Activated B cell treated with CpG ODN at 0.5 μM for 24 hours (primary cell): ENCODE measurements at regions of chr1 and their contacts with region 1.

Region 1: GRCh38 chr1:247373721-247374141 is 42.1 kb upstream of the ZNF496 start:
- DNase-seq: peak; percentile 52
- ATAC-seq: peak; percentile 87
- H3K4me3 Mint-ChIP-seq: peak overlapping the region; percentile 32
- H3K27ac Mint-ChIP-seq: no peak overlapping the region
- H3K4me1 Mint-ChIP-seq: peaks cover 7% of the 10 kb centered on the region
- H3K27me3 Mint-ChIP-seq: peaks cover 11% of the 10 kb centered on the region
- CTCF ChIP-seq: no peak

Region 2: GRCh38 chr1:246907472-246907871 is 466.3 kb before region 1 on chr1:
- CTCF ChIA-PET with region 1: interaction called, 11 read pairs
- POLR2A ChIA-PET with region 1: no interaction called
- intact Hi-C with region 1: loop called (anchors 1 kb)
- DNase-seq: no peak
- ATAC-seq: no peak
- H3K4me3 Mint-ChIP-seq: no peak overlapping the region
- H3K27ac Mint-ChIP-seq: no peak overlapping the region
- H3K4me1 Mint-ChIP-seq: no peaks in the 10 kb centered on the region
- H3K27me3 Mint-ChIP-seq: no peaks in the 10 kb centered on the region
- CTCF ChIP-seq: no peak

Region 3: DNA sequence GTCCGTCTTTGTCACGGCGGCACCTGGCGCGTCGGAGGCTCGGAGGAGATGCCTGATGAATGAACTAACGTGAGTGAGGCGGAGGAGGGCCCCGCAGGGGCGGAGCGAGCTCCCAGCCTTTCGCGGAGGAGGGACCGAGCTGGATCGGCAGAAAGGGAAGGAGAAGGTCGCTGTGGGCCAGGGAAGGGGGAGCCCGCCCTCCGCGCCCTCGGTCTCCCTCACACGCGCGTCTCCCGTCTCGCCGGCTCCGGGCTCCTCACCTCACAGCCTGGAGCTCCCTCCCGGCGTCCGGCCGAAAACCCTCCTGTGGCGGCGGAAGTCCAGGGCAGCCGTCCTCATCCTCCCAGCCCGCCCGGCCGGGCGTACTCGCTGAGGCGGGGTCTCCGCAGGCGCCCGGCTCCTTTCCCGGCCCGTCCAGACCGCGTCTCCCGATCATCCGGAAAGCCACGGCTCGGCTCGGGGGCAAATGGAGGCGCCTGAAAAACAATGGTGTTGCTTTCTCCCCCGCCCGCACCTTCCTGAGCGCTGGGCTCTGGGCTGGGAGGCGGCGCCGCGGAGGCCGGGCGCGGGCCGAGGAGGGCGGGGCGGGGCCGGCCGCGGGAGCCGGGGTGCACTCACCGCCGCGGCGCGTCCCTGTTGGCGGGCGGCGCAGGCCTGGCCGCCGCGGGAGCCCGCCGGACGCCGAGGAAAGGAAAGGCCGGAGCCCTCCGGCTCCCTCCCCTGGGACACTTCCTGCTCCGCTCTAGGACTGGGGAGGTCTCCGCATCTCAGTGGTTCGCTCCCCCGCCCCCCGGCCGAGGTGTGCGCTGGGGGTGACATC is 42.3 kb before region 1 on chr1 and contains the start of gene ZNF496:
- CTCF ChIA-PET with region 1: interaction called, 6 read pairs
- POLR2A ChIA-PET with region 1: no interaction called
- intact Hi-C with region 1: loop called (anchors 5 kb)
- DNase-seq: peak; percentile 59
- ATAC-seq: peak; percentile 73
- H3K4me3 Mint-ChIP-seq: peak within 1 kb of the TSS; percentile 89
- H3K27ac Mint-ChIP-seq: peak within 1 kb of the TSS; percentile 59
- H3K4me1 Mint-ChIP-seq: peaks cover 23% of the 10 kb centered on the region
- H3K27me3 Mint-ChIP-seq: no peaks in the 10 kb centered on the region
- CTCF ChIP-seq: no peak
- total RNA-seq, gene ZNF496: 15.0 and 21.2 TPM in 2 replicates

Region 4: DNA sequence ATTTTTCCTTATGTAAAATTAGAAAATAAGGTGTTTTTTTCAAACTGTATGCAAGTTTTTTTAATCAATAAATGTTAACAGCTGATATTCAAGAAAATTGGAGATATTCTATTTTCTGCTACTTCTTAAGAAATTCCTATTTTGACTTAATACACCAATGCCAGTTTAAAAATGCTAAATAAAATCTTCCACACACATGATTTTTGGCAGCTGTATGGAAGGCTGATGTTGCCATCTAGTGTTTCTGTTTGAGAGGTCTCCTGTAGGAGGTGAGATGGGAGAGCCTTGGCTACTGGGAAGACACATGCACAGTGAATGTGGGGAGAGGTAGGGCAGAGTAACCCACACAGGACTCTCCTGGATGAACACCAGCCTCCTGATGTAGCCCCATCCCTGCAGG is 113.3 kb after region 1 on chr1:
- CTCF ChIA-PET with region 1: interaction called, 149 read pairs
- POLR2A ChIA-PET with region 1: no interaction called
- intact Hi-C with region 1: loop called (anchors 1 kb)
- DNase-seq: peak; percentile 17
- ATAC-seq: peak; percentile 81
- H3K4me3 Mint-ChIP-seq: no peak overlapping the region
- H3K27ac Mint-ChIP-seq: no peak overlapping the region
- H3K4me1 Mint-ChIP-seq: no peaks in the 10 kb centered on the region
- H3K27me3 Mint-ChIP-seq: peaks cover 6% of the 10 kb centered on the region
- CTCF ChIP-seq: peak; percentile 55

Region 5: DNA sequence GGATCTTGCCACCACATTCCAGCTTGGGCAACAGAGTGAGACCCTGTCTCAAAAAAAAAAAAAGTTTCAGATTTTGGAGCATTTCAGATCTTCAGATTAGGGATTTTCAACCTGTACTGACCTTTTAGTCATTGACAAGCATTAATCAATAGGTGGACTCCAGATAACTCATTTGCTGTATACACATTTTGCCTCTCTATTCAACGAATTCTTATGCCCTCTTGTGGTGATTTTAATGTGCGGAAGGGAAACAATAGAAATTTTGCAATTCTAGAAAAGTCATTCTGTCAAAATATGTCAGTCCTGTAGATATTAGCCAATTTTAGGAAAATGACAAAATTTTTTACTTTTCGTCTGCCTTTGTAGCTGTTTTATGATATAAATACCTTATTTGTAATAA is 202.8 kb after region 1 on chr1:
- CTCF ChIA-PET with region 1: interaction called, 3 read pairs
- POLR2A ChIA-PET with region 1: no interaction called
- intact Hi-C with region 1: loop called (anchors 1 kb)
- DNase-seq: no peak
- ATAC-seq: no peak
- H3K4me3 Mint-ChIP-seq: no peak overlapping the region
- H3K27ac Mint-ChIP-seq: no peak overlapping the region
- H3K4me1 Mint-ChIP-seq: no peaks in the 10 kb centered on the region
- H3K27me3 Mint-ChIP-seq: peaks cover 14% of the 10 kb centered on the region
- CTCF ChIP-seq: no peak